Naive thymus-derived CD4-positive, alpha-beta T cell (primary cell): ENCODE measurements at regions of chr3 and their contacts with region 1.

Region 1: DNA sequence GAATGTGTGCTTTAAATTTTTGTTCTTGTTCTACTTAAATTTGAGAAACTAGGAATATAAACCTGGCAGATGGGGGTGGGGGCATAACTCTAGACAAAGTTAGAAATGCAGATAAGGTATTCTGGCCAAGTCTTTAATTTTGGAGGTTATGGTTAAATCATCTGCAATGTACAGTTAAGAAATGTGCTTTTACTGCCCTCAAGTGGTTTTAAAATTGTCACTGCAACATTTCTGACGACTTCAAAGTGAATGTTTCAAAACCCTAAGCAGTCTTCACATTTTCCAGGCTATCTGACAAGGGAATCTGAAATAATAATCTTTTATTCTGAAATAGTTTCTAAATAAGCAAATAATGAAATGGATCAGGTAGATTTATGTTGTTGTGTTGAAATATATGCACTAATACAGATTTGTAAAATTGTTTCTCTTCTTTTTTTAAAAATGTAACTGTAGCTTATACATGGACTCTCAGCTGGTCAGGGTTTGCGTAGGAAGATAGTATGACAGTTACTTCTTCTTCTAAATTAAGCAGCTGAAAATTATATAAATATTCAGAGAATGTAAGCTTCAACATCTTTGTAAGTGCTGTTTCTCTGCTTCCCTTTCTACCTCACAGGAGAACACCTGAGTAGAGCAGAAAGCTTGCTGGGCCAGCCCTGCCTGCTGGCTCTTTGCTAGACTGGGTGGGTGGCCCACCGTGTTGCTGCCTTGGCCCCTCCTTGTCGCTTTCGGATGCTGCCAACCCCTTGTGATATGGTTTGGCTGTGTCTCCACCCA is 45.0 kb downstream of the SUCNR1 start:
- DNase-seq: peak in 5 of 9 donors; percentile 11 to 40 (median 21)
- ATAC-seq: peak; percentile 57
- H3K4me3 ChIP-seq: no peak overlapping the region
- H3K4me3 Mint-ChIP-seq: no peak overlapping the region
- H3K27ac ChIP-seq: no peak overlapping the region
- H3K27ac Mint-ChIP-seq: no peak overlapping the region
- H3K4me1 ChIP-seq: no peaks in the 10 kb centered on the region
- H3K4me1 Mint-ChIP-seq: no peaks in the 10 kb centered on the region
- H3K27me3 ChIP-seq: no peaks in the 10 kb centered on the region
- H3K27me3 Mint-ChIP-seq: peaks cover 0 to 7% (median 0%) of the 10 kb centered on the region in 5 donors

Region 2: DNA sequence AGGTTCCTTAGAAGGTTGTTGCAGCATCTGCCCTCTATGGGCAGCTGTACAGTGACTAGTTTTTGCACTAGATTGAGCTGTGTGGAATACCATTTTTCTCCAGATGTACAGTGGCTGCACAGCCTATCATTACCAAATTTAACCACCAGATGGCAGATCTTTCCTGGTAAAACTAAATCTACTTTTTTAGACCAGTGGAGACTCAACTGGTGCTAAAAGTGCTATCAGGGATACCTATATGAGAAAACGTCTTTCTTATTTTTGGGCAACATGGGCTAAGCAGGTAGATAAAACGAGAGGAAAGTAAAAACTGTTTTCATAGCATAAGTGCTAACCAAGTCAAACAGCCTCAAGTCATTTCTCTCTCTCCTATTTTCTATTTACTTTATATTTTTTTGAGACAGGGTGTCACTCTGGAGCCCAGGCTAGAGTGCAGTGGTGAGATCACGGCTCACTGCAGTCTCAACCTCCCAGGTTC is 478.8 kb before region 1 on chr3:
- CTCF ChIA-PET with region 1: no interaction called
- POLR2A ChIA-PET with region 1: no interaction called
- intact Hi-C with region 1: loop called in 1 of 2 experiments (anchors 1 kb)
- DNase-seq: peak in 6 of 9 donors; percentile 18 to 33 (median 24)
- ATAC-seq: peak; percentile 65
- H3K4me3 ChIP-seq: no peak overlapping the region
- H3K4me3 Mint-ChIP-seq: no peak overlapping the region
- H3K27ac ChIP-seq: no peak overlapping the region
- H3K27ac Mint-ChIP-seq: no peak overlapping the region
- H3K4me1 ChIP-seq: no peaks in the 10 kb centered on the region
- H3K4me1 Mint-ChIP-seq: no peaks in the 10 kb centered on the region
- H3K27me3 ChIP-seq: no peaks in the 10 kb centered on the region
- H3K27me3 Mint-ChIP-seq: peaks cover 0 to 9% (median 0%) of the 10 kb centered on the region in 5 donors

Region 3: DNA sequence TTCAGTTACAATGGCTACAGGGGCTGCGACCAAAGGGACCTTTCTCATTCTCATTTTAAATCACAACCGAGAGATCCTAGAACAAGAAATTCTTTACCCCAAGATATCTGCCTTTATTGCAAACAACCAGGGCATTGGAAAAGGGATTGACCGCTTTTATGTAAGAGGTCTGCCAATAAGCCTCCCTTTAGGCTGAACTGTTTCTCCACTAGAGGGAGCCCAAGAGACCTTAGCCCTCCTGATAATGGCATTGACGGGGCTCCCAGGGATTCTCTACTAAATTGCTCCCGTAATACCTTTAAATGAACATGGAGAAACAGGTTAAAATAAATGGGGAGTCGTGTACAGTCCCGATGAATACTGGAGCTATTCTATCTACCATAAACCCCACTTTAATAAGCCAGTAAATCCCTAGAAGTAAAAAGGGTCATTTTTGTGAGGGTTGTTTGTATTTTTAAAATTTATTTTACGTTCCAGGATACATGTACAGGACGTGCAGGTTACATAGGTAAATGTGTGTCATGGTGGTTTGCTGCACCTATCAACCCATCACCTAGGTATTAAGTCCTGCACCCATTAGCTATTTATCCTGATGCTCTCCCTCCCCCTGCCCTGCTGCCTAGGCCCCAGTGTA is 450.0 kb before region 1 on chr3:
- CTCF ChIA-PET with region 1: no interaction called
- POLR2A ChIA-PET with region 1: no interaction called
- intact Hi-C with region 1: loop called in 1 of 2 experiments (anchors 1 kb)
- DNase-seq: peak in 7 of 9 donors; percentile 14 to 64 (median 31)
- ATAC-seq: peak; percentile 67
- H3K4me3 ChIP-seq: no peak overlapping the region
- H3K4me3 Mint-ChIP-seq: no peak overlapping the region
- H3K27ac ChIP-seq: no peak overlapping the region
- H3K27ac Mint-ChIP-seq: no peak overlapping the region
- H3K4me1 ChIP-seq: no peaks in the 10 kb centered on the region
- H3K4me1 Mint-ChIP-seq: no peaks in the 10 kb centered on the region
- H3K27me3 ChIP-seq: no peaks in the 10 kb centered on the region
- H3K27me3 Mint-ChIP-seq: peaks cover 10 to 22% (median 12%) of the 10 kb centered on the region in 5 donors